ENCODE measurements at regions of chr12 and their contacts with region 1.

Region 1: GRCh38 chr12:65986047-65986446 is 144.5 kb downstream of the LLPH start:
- DNase-seq: no peak
- H3K4me3 ChIP-seq: no peak overlapping the region
- H3K4me3 Mint-ChIP-seq: no peak overlapping the region
- H3K27ac Mint-ChIP-seq: no peak overlapping the region
- H3K4me1 ChIP-seq: no peaks in the 10 kb centered on the region
- H3K4me1 Mint-ChIP-seq: peaks cover 4% of the 10 kb centered on the region
- H3K27me3 ChIP-seq: no peaks in the 10 kb centered on the region
- H3K27me3 Mint-ChIP-seq: no peaks in the 10 kb centered on the region
- CTCF ChIP-seq: no peak

Region 2: DNA sequence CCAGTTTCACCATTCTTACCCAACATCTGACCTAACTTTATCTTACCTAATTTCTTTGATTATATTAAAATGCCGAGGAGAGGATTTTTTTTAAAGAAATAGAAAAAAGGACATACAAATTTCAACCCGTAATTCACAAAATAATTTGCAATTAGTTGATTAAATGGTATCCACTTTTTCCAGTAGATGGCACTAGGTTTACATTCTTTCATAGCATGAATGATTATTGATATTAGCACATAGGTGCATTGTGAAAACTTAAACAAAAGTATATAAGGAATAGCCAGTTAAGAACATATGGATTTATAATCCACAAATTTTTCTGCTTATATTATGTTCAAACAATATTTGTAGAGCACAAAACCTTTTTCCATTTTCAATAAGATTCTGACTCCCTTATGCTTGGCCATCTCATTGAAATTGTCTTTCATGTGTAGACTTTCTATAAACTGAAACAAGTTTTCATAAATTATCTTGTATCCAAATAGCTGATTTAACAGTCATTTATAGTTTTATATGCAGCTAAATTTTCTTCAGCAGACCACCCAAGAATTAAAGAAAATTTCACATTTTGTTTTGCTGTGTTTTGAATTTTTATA is 672.2 kb before region 1 on chr12:
- CTCF ChIA-PET with region 1: no interaction called
- POLR2A ChIA-PET with region 1: no interaction called
- intact Hi-C with region 1: loop called (anchors 1 kb)
- DNase-seq: no peak
- H3K4me3 ChIP-seq: no peak overlapping the region
- H3K4me3 Mint-ChIP-seq: no peak overlapping the region
- H3K27ac Mint-ChIP-seq: no peak overlapping the region
- H3K4me1 ChIP-seq: 0 out of 2 replicates have a peak, but pooled peaks cover 3% of the 10 kb centered on the region
- H3K4me1 Mint-ChIP-seq: peaks cover 1% of the 10 kb centered on the region
- H3K27me3 ChIP-seq: no peaks in the 10 kb centered on the region
- H3K27me3 Mint-ChIP-seq: no peaks in the 10 kb centered on the region
- CTCF ChIP-seq: peak; percentile 28 to 33

Region 3: GRCh38 chr12:65602610-65603295 is 383.3 kb before region 1 on chr12:
- CTCF ChIA-PET with region 1: no interaction called
- POLR2A ChIA-PET with region 1: no interaction called
- intact Hi-C with region 1: loop called (anchors 5 kb)
- DNase-seq: peak; percentile 67
- H3K4me3 ChIP-seq: no peak overlapping the region
- H3K4me3 Mint-ChIP-seq: no peak overlapping the region
- H3K27ac Mint-ChIP-seq: no peak overlapping the region
- H3K4me1 ChIP-seq: peaks cover 19% of the 10 kb centered on the region
- H3K4me1 Mint-ChIP-seq: peaks cover 24% of the 10 kb centered on the region
- H3K27me3 ChIP-seq: no peaks in the 10 kb centered on the region
- H3K27me3 Mint-ChIP-seq: no peaks in the 10 kb centered on the region
- CTCF ChIP-seq: peak; percentile 65 to 67

Region 4: DNA sequence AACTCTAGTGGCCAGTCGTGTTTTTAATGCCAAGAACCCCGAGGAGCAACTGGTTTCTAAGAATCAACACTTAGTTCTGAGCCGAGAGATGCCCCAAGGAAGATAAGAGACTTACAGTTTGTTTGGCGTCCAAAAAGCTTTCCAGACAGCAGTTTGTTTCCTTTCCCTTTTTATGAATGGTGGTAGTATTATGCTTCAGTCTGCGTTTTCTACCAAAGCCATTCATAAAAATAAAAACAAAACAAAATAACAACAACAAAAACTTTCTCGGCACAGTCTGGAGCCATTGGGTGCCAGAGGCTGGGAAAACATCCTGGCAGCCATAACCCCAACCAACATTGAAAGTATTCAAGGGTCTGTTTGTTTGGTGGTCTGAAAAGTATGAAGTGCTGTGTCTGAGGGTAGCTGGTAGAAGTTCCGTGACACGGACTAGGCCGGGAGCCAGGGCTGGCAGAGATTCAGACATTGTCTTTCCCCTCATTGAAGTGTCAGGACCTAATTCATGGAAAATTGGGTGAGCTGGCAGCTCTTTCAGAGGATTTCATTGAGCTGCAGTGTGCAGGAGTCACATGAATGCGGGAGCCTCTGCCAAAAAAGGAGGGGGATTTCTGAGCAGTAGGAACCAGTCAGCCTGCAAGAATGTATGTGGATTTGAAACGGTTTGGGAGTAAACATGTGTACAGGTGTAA is 37.6 kb before region 1 on chr12:
- CTCF ChIA-PET with region 1: no interaction called
- POLR2A ChIA-PET with region 1: no interaction called
- intact Hi-C with region 1: loop called (anchors 5 kb)
- DNase-seq: no peak
- H3K4me3 ChIP-seq: no peak overlapping the region
- H3K4me3 Mint-ChIP-seq: no peak overlapping the region
- H3K27ac Mint-ChIP-seq: no peak overlapping the region
- H3K4me1 ChIP-seq: peaks cover 26% of the 10 kb centered on the region
- H3K4me1 Mint-ChIP-seq: peaks cover 7% of the 10 kb centered on the region
- H3K27me3 ChIP-seq: no peaks in the 10 kb centered on the region
- H3K27me3 Mint-ChIP-seq: no peaks in the 10 kb centered on the region
- CTCF ChIP-seq: no peak

Region 5: GRCh38 chr12:66047411-66048021 is 61.5 kb after region 1 on chr12:
- CTCF ChIA-PET with region 1: no interaction called
- POLR2A ChIA-PET with region 1: no interaction called
- intact Hi-C with region 1: loop called (anchors 1 kb)
- DNase-seq: no peak
- H3K4me3 ChIP-seq: no peak overlapping the region
- H3K4me3 Mint-ChIP-seq: no peak overlapping the region
- H3K27ac Mint-ChIP-seq: no peak overlapping the region
- H3K4me1 ChIP-seq: peaks cover 41% of the 10 kb centered on the region
- H3K4me1 Mint-ChIP-seq: peaks cover 10% of the 10 kb centered on the region
- H3K27me3 ChIP-seq: no peaks in the 10 kb centered on the region
- H3K27me3 Mint-ChIP-seq: no peaks in the 10 kb centered on the region
- CTCF ChIP-seq: no peak

Region 6: DNA sequence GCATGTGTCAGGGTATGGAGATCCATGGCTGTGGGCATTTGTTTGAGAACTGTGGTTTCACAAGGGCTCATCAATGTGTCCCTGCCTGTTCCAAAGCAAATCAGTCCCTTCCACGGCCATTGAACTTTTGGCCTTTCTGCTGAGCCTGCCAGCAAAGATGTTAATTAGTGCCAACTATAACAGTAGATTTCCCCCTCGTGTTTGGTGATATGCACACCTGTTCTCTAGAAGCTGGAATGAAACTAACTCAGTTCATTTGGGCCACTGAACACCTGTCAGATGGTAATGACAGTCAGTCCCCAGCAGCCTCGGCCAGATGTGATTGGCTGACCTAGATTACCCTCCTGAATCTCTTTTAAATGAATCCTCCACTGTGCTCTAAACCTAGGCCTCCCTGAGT is 246.2 kb after region 1 on chr12:
- CTCF ChIA-PET with region 1: no interaction called
- POLR2A ChIA-PET with region 1: no interaction called
- intact Hi-C with region 1: no loop called
- DNase-seq: no peak
- H3K4me3 ChIP-seq: no peak overlapping the region
- H3K4me3 Mint-ChIP-seq: no peak overlapping the region
- H3K27ac Mint-ChIP-seq: no peak overlapping the region
- H3K4me1 ChIP-seq: peaks cover 6% of the 10 kb centered on the region
- H3K4me1 Mint-ChIP-seq: no peaks in the 10 kb centered on the region
- H3K27me3 ChIP-seq: no peaks in the 10 kb centered on the region
- H3K27me3 Mint-ChIP-seq: no peaks in the 10 kb centered on the region
- CTCF ChIP-seq: no peak

Measured in Caco-2 (cell line).